Right cardiac atrium (tissue), 5 donors: ENCODE measurements at regions of chr18 and their contacts with region 1.

Region 1: DNA sequence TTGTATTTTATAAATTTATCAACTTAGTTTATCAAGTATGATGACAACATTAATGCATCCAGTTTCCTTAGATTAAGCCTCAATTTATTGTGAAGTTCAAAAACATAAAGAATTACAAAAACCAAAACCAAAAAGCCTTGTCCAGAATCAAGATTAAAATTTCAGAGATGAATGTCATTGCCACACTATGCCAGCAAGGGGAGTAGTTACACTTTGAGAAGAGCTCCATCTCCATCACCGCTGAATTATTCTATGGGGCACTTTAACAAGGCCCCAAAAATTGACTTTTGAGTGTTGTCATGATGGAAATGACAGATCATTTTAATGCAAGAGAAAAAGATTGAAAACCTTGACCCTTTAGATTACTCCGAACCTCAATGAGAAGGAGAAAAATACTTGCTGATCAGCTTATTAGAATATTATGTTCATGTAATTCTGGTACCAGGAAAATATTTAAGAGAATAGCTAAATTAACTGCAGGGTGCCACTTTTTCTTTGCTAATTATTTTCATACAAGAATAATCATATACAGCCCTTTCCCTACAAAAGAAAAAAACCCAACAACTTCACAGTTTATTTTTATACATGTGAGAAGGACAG is 152.5 kb upstream of the AQP4 start:
- DNase-seq: no peak
- ATAC-seq: no peak
- H3K4me3 ChIP-seq: no peak overlapping the region
- H3K27ac ChIP-seq: no peak overlapping the region
- H3K4me1 ChIP-seq: no peaks in the 10 kb centered on the region
- H3K27me3 ChIP-seq: no peaks in the 10 kb centered on the region

Region 2: GRCh38 chr18:27298214-27298804 is 280.3 kb after region 1 on chr18:
- intact Hi-C with region 1: loop called (anchors 2 to 5 kb)
- DNase-seq: no peak
- ATAC-seq: no peak
- H3K4me3 ChIP-seq: no peak overlapping the region
- H3K27ac ChIP-seq: no peak overlapping the region
- H3K4me1 ChIP-seq: no peaks in the 10 kb centered on the region
- H3K27me3 ChIP-seq: no peaks in the 10 kb centered on the region